SK-N-SH (cell line): ENCODE measurements at regions of chr5 and their contacts with region 1.

Region 1: GRCh38 chr5:16864631-16865131 is 71.4 kb downstream of the MYO10 start:
- DNase-seq: no peak
- H3K4me3 ChIP-seq: no peak overlapping the region
- H3K27ac ChIP-seq: peak overlapping the region in 1 of 2 experiments; percentile 18; a peak in 2 of 4 replicates
- H3K4me1 ChIP-seq: peaks cover 16 to 20% of the 10 kb centered on the region in 2 experiments; a peak in 3 of 4 replicates
- H3K27me3 ChIP-seq: no peaks in the 10 kb centered on the region
- CTCF ChIP-seq: no peak
- EP300 ChIP-seq: peak in 1 of 2 experiments; percentile 53; a peak in 1 of 4 replicates
- RAD21 ChIP-seq: no peak

Region 2: GRCh38 chr5:16934123-16934522 is 69.4 kb after region 1 on chr5:
- CTCF ChIA-PET with region 1: interaction called, 10 read pairs
- POLR2A ChIA-PET with region 1: no interaction called
- DNase-seq: peak; percentile 83
- H3K4me3 ChIP-seq: peak overlapping the region; percentile 80 to 85
- H3K27ac ChIP-seq: peak overlapping the region in 1 of 2 experiments; percentile 77; a peak in 2 of 4 replicates
- H3K4me1 ChIP-seq: peaks cover 17 to 26% of the 10 kb centered on the region in 2 experiments; a peak in 3 of 4 replicates
- H3K27me3 ChIP-seq: no peaks in the 10 kb centered on the region
- CTCF ChIP-seq: peak; percentile 96
- EP300 ChIP-seq: no peak
- RAD21 ChIP-seq: peak; percentile 69

Region 3: DNA sequence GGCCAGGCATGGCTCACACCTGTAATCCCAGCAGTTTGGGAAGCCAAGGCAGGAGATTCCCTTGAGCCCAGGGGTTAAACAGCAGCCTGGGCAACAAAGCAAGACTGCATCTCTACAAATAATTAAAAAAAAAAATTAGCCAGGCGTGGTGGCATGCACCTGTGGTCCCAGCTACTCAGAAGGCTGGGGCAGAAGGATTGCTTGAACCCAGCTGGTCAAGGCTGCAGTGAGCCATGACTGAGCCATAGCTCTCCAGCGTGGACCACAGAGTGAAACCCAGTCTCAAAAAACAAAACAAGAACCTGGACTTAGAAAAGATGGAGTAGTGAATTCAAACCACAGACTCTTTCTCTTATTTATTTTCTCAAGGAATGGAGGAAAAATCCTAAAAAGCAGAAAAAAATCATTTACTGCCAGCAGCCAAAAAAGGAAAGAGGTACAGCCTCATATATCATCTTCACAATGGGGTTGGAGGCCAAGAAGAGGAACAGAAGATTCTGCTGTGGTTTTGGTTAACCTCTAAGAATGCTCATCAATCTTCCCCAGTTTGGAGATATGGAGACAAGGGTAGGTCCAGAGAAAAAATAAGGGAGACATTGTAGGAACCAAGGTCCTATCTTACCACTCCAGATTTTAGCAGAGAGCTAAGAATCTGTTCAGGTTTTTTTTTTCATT is 111.4 kb after region 1 on chr5:
- CTCF ChIA-PET with region 1: no interaction called
- POLR2A ChIA-PET with region 1: no interaction called
- DNase-seq: no peak
- H3K4me3 ChIP-seq: no peak overlapping the region
- H3K27ac ChIP-seq: no peak overlapping the region
- H3K4me1 ChIP-seq: no peaks in the 10 kb centered on the region
- H3K27me3 ChIP-seq: no peaks in the 10 kb centered on the region
- CTCF ChIP-seq: no peak
- EP300 ChIP-seq: no peak
- RAD21 ChIP-seq: no peak